ENCODE measurements at regions of chr3 and their contacts with region 1.

Region 1: GRCh38 chr3:187679638-187680396 is 9.6 kb upstream of the SST start:
- H3K4me3 ChIP-seq: no peak overlapping the region
- H3K27ac ChIP-seq: no peak overlapping the region
- H3K4me1 ChIP-seq: no peaks in the 10 kb centered on the region
- CTCF ChIP-seq: peak; percentile 81

Region 2: GRCh38 chr3:187223799-187224198 is 456.0 kb before region 1 on chr3:
- CTCF ChIA-PET with region 1: interaction called, 28 read pairs
- POLR2A ChIA-PET with region 1: no interaction called
- H3K4me3 ChIP-seq: no peak overlapping the region
- H3K27ac ChIP-seq: no peak overlapping the region
- H3K4me1 ChIP-seq: no peaks in the 10 kb centered on the region
- CTCF ChIP-seq: no peak

Region 3: DNA sequence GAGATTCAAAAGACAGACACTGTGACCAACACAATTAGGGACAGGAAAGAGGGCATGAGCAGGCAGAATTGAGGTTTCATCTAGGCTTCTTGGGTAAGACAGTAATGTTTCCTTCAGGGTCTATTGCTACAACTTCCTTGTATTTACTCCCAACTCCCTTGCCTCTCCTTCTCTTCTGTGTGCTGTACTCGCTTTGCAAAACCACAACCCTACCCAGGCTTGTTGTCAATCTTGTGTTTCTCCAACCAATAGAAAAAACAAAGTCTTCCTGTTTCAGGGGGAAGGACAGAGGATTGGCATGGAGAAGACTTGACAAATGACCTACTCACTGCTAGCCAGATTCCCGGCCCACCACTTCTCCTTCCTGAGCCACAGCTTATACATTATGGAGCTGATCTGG is 352.0 kb before region 1 on chr3:
- CTCF ChIA-PET with region 1: interaction called, 407 read pairs
- POLR2A ChIA-PET with region 1: no interaction called
- H3K4me3 ChIP-seq: no peak overlapping the region
- H3K27ac ChIP-seq: no peak overlapping the region
- H3K4me1 ChIP-seq: no peaks in the 10 kb centered on the region
- CTCF ChIP-seq: no peak

Region 4: DNA sequence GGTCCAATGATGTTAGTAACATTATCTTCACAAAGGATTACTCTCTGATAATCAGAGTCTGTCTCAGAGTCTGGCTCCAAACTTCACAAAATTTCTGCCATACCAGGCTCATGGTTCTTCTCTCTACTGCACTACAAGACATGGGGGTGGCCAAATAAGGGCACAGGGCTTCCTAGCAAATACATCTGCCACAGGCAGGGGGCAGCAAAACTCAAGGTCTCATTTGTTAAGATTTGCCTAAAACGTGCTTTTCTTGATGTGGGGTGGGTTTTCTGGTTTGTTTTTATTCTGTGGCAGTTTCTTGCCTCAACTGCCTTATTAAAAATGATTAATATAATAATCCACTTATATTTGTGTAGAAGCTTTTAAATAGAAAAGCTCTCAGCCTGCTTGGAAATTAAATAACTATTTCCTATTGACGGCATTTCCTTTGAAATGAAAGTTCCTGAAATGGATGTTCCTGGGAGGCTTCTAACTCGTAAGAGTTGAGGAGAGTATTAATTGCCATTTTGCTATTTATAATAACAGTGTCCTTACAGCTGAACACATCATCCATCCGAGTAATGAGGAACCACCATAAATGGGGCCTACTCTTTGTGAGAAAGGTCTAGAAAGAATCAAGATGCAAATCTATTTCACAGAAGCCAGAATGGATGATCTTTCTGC is 63.4 kb before region 1 on chr3:
- CTCF ChIA-PET with region 1: interaction called, 46 read pairs
- POLR2A ChIA-PET with region 1: no interaction called
- H3K4me3 ChIP-seq: no peak overlapping the region
- H3K27ac ChIP-seq: no peak overlapping the region
- H3K4me1 ChIP-seq: no peaks in the 10 kb centered on the region
- CTCF ChIP-seq: no peak

Region 5: DNA sequence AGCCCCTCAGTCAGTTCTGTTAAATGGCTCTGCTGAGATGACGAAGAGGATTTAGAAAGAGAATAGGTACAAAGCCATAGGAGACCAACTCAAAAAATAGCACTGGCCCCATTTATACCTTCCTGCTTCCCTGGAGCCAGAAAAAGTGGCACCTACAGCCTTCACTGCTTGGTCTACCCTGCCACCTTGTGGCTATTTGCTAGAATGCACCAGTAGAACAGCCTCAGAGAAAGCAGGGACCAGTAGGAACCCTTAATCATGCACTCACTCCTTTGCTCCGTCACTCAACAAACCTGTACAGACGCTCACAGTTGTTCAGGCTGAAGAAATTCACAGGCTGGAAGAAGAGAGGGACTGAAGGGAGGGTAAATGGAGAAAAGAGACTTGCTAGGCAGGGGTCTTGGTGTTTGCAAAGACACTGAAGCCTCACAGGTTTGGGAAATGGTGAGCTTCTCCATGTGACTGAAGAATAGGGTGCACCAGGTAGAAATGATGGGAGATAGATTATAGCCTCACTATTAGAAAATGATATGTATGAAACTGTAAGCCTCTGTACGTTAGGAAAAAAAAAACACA is 34.7 kb after region 1 on chr3:
- CTCF ChIA-PET with region 1: interaction called, 27 read pairs
- POLR2A ChIA-PET with region 1: no interaction called
- H3K4me3 ChIP-seq: no peak overlapping the region
- H3K27ac ChIP-seq: no peak overlapping the region
- H3K4me1 ChIP-seq: no peaks in the 10 kb centered on the region
- CTCF ChIP-seq: peak; percentile 67

Region 6: DNA sequence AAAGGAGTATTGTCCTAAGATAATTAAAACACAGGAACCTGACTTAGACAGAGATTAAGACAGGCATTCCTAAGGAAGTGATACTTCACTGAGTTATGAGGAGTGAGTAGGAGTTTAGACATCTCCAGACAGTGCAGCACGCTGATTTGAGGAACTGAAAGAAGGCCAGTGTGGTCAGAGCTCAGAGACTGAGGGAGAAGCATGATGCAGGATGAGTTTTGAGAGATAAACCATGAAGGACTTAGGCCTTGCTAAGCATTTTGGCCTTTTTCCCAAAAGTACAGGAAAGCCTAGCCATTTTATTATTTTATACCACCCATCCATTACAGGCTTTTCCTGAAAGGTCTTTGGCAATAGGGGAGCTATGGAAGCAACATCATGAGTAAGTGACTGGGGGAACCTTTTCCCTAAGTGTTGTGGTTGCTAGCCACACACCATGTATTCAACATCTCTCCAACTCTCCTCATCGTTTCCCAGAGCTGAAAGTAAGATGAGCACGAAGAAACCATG is 1116.4 kb after region 1 on chr3:
- CTCF ChIA-PET with region 1: no interaction called
- POLR2A ChIA-PET with region 1: no interaction called
- H3K4me3 ChIP-seq: no peak overlapping the region
- H3K27ac ChIP-seq: no peak overlapping the region
- H3K4me1 ChIP-seq: no peaks in the 10 kb centered on the region
- CTCF ChIP-seq: no peak

Measured in HEK293 (cell line).